GM12878 (cell line): ENCODE measurements at regions of chr12 and their contacts with region 1.

Region 1: GRCh38 chr12:9049520-9050133 is 60.3 kb downstream of the KLRG1 start:
- DNase-seq: no peak
- ATAC-seq: peak; percentile 74
- H3K4me3 ChIP-seq: no peak overlapping the region
- H3K27ac ChIP-seq: no peak overlapping the region
- H3K4me1 ChIP-seq: no peaks in the 10 kb centered on the region
- H3K27me3 ChIP-seq: peaks cover 0 to 3% of the 10 kb centered on the region in 2 experiments; a peak in 2 of 4 replicates
- CTCF ChIP-seq: peak; percentile 34 to 53 (median 50)
- EP300 ChIP-seq: no peak
- POLR2A ChIP-seq: no peak
- RAD21 ChIP-seq: peak; percentile 61

Region 2: GRCh38 chr12:8662593-8662992 is 387.0 kb before region 1 on chr12 and contains the start of gene MFAP5:
- CTCF ChIA-PET with region 1: interaction called, 31 read pairs
- POLR2A ChIA-PET with region 1: no interaction called
- RAD21 ChIA-PET with region 1: interaction called, 11 read pairs
- SMC1A ChIA-PET with region 1: interaction called, 9 read pairs
- in situ Hi-C with region 1: no loop called
- intact Hi-C with region 1: no loop called
- DNase-seq: no peak
- ATAC-seq: no peak
- H3K4me3 ChIP-seq: no peak within 1 kb of the TSS
- H3K27ac ChIP-seq: no peak within 1 kb of the TSS
- H3K4me1 ChIP-seq: no peaks in the 10 kb centered on the region
- H3K27me3 ChIP-seq: peaks cover 0 to 5% of the 10 kb centered on the region in 2 experiments; a peak in 2 of 4 replicates
- CTCF ChIP-seq: no peak
- EP300 ChIP-seq: no peak
- POLR2A ChIP-seq: no peak
- RAD21 ChIP-seq: no peak
- polyA plus RNA-seq, gene MFAP5: not detected

Region 3: DNA sequence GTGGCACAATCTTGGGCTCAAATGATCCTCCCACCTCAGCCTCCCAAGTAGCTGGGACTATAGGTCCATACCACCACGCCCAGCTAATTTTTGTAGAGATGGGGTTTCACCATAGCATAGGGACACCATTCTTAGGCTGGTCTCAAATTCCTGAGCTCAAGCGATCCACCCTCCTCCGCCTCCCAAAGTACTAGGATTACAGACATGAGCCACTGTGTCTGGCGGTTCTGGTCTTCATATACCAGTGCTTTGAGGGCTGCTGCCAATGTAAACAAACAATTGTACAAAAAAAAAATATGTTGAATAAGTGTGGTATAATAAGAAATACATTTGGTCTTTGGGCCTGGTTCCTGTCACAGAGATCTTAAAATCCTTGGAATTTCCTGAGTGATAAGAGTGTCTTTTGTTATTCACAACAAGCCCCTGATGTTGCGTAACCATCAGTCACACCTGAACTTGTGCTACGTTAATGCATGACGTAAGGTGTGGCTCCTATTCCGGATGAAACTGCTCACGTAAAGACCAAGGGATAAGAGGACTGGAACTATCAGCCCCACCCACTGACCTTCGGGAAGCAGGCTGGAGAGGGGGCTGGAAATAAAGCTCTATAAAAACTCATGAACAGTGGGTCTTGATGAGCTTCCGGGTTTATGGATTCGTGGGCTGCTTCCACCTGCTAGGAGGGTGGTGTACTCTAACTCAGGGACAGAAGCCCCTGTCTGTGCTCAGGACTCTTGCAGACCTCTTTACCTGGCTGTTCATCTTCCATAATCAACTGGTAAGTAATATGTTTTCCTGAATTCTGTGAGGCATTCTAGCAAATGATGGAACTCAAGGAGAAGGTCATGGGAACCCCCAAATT is 368.4 kb before region 1 on chr12:
- CTCF ChIA-PET with region 1: interaction called, 15 read pairs
- POLR2A ChIA-PET with region 1: no interaction called
- RAD21 ChIA-PET with region 1: interaction called, 3 read pairs
- SMC1A ChIA-PET with region 1: interaction called, 6 read pairs
- in situ Hi-C with region 1: loop called (anchors 5 kb)
- intact Hi-C with region 1: no loop called
- DNase-seq: no peak
- ATAC-seq: no peak
- H3K4me3 ChIP-seq: no peak overlapping the region
- H3K27ac ChIP-seq: no peak overlapping the region
- H3K4me1 ChIP-seq: no peaks in the 10 kb centered on the region
- H3K27me3 ChIP-seq: no peaks in the 10 kb centered on the region
- CTCF ChIP-seq: no peak
- EP300 ChIP-seq: no peak
- POLR2A ChIP-seq: no peak
- RAD21 ChIP-seq: no peak

Region 4: DNA sequence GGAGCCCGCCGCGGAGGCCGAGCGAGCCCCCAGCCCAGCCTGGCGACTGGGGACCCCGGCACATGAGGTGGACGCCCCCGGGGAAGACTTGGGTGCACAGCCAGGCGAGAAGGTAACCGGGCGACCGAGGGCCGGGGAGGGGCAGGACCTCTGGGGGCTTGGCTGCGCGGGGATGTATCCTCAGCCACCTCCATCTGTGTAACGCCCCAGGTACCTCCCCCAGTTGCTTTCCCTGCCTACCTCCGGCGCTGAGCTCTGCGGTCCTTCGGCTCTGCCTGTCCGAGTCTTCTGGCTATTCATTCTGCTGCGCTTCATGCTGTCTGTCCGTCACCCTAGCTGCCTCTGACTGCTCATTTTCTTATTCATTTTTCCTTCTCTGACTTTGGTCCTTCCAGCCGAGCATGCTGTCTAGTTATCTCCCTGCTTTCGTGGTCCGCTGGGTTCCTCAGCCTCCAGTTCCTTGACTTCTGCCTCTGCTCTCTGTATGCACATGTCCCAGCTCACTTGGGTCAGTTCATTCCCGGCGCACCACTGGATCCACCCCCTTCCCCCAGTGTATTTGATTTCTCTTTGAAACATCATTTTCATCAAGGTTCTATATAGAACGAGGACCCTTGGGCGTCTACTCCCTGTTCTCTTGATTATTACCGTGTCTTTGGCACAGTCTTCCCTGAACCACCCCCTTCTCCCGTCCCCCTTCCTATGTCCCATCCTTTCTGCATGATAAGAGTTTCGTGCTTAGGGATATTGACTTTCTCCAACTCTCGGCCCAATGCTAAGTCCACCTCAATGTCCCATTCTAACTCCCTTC is 134.7 kb before region 1 on chr12:
- CTCF ChIA-PET with region 1: interaction called, 4 read pairs
- POLR2A ChIA-PET with region 1: no interaction called
- RAD21 ChIA-PET with region 1: interaction called, 4 read pairs
- SMC1A ChIA-PET with region 1: no interaction called
- in situ Hi-C with region 1: no loop called
- intact Hi-C with region 1: loop called (anchors 10 kb)
- DNase-seq: no peak
- ATAC-seq: peak; percentile 90
- H3K4me3 ChIP-seq: peak overlapping the region; percentile 71
- H3K27ac ChIP-seq: no peak overlapping the region
- H3K4me1 ChIP-seq: peaks cover 4% of the 10 kb centered on the region
- H3K27me3 ChIP-seq: no peaks in the 10 kb centered on the region; a peak in 1 of 4 replicates
- CTCF ChIP-seq: no peak
- EP300 ChIP-seq: no peak
- POLR2A ChIP-seq: no peak
- RAD21 ChIP-seq: no peak

Region 5: DNA sequence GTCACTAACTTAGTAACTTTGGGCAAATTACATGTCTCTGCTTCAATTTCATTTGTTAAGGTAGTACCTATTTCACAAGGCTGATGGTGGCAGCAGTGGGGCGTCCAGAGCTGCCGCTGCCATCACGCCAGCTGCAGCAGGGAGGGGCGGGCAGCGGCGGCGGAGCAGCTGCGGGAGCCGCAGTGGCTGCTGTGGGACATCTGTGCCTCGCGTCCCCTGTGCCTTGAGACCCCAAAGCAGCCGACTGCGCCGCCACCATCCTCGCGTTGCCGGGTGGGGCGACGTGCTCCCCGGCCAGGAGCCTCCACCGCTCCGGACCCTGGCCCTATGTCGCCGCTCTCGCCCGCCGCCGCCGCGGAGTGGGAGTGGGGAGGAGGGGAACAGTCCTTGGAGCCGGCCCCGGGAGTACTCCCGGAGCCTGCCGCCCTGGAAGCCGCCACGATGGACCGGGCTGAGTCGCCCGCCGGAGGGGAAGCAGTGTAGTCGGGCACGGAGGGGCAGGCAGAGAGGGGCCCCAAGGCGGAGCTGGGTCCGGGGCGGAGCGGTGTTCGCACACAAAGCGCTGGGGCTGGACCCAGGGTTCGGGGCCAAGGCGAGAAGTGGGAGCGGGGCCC is 14.7 kb after region 1 on chr12:
- CTCF ChIA-PET with region 1: interaction called, 10 read pairs
- POLR2A ChIA-PET with region 1: no interaction called
- RAD21 ChIA-PET with region 1: no interaction called
- SMC1A ChIA-PET with region 1: interaction called, 8 read pairs
- in situ Hi-C with region 1: no loop called
- intact Hi-C with region 1: no loop called
- DNase-seq: no peak
- ATAC-seq: no peak
- H3K4me3 ChIP-seq: 0 out of 2 replicates have a peak overlapping the region, but pooled peaks have one; percentile 20
- H3K27ac ChIP-seq: no peak overlapping the region
- H3K4me1 ChIP-seq: no peaks in the 10 kb centered on the region
- H3K27me3 ChIP-seq: peaks cover 0 to 4% of the 10 kb centered on the region in 2 experiments; a peak in 3 of 4 replicates
- CTCF ChIP-seq: peak in 2 of 3 experiments; percentile 22 to 23; a peak in 1 of 6 replicates
- EP300 ChIP-seq: no peak
- POLR2A ChIP-seq: no peak
- RAD21 ChIP-seq: peak; percentile 58; the same call in 1 of the 2 replicates

Region 6: DNA sequence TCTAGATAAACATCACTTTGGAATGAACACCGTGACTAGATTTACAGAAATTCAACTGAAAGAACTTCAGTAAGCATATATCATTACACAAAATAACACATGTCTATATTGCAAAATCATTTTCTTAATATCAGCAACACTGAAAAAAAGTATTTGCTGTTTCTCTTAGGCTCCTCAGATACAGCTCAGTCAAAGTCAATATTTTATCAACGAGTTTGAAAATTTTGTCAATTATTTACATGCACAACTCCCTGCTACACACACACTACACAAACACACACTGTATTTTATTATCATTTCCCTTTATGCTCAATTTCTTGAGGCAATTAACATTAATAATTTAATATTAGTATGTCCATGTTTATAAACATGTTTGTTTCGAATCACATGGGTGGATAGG is 154.8 kb after region 1 on chr12:
- CTCF ChIA-PET with region 1: no interaction called
- POLR2A ChIA-PET with region 1: no interaction called
- RAD21 ChIA-PET with region 1: no interaction called
- SMC1A ChIA-PET with region 1: no interaction called
- in situ Hi-C with region 1: no loop called
- intact Hi-C with region 1: no loop called
- DNase-seq: no peak
- ATAC-seq: no peak
- H3K4me3 ChIP-seq: no peak overlapping the region
- H3K27ac ChIP-seq: no peak overlapping the region
- H3K4me1 ChIP-seq: no peaks in the 10 kb centered on the region
- H3K27me3 ChIP-seq: no peaks in the 10 kb centered on the region
- CTCF ChIP-seq: no peak
- EP300 ChIP-seq: no peak
- POLR2A ChIP-seq: no peak
- RAD21 ChIP-seq: no peak